Heart left ventricle (tissue), 16 donors: ENCODE measurements at regions of chr3 and their contacts with region 1.

Region 1: GRCh38 chr3:150238998-150239619 is 169.0 kb upstream of the TSC22D2 start:
- DNase-seq: no peak
- ATAC-seq: peak in 1 of 4 donors; percentile 23
- H3K4me3 ChIP-seq: no peak overlapping the region
- H3K27ac ChIP-seq: no peak overlapping the region
- H3K4me1 ChIP-seq: peaks cover 0 to 35% (median 8%) of the 10 kb centered on the region in 12 donors
- H3K27me3 ChIP-seq: no peaks in the 10 kb centered on the region
- CTCF ChIP-seq: peak in 8 of 12 donors; percentile 22 to 47 (median 35)
- POLR2A ChIP-seq: no peak

Region 2: GRCh38 chr3:150253622-150254021 is 14.5 kb after region 1 on chr3:
- intact Hi-C with region 1: loop called in 1 of 10 experiments (anchors 2 kb)
- DNase-seq: peak in 4 of 5 donors; percentile 19 to 27 (median 26)
- ATAC-seq: peak in 1 of 4 donors; percentile 22
- H3K4me3 ChIP-seq: no peak overlapping the region
- H3K27ac ChIP-seq: peak overlapping the region in 3 of 12 donors; percentile 17 to 88 (median 86)
- H3K4me1 ChIP-seq: peaks cover 0 to 53% (median 5%) of the 10 kb centered on the region in 12 donors
- H3K27me3 ChIP-seq: no peaks in the 10 kb centered on the region
- CTCF ChIP-seq: no peak
- POLR2A ChIP-seq: no peak

Region 3: GRCh38 chr3:150286390-150287147 is 47.5 kb after region 1 on chr3:
- intact Hi-C with region 1: loop called in 1 of 10 experiments (anchors 5 kb)
- DNase-seq: no peak
- ATAC-seq: peak; percentile 50 to 79 (median 71)
- H3K4me3 ChIP-seq: no peak overlapping the region
- H3K27ac ChIP-seq: no peak overlapping the region
- H3K4me1 ChIP-seq: no peaks in the 10 kb centered on the region
- H3K27me3 ChIP-seq: no peaks in the 10 kb centered on the region
- CTCF ChIP-seq: peak; percentile 39 to 70 (median 58)
- POLR2A ChIP-seq: no peak

Region 4: GRCh38 chr3:150449169-150449721 is 210.1 kb after region 1 on chr3:
- intact Hi-C with region 1: no loop called
- DNase-seq: no peak
- ATAC-seq: peak in 1 of 4 donors; percentile 45
- H3K4me3 ChIP-seq: no peak overlapping the region
- H3K27ac ChIP-seq: no peak overlapping the region
- H3K4me1 ChIP-seq: peaks cover 3 to 65% (median 36%) of the 10 kb centered on the region in 12 donors
- H3K27me3 ChIP-seq: no peaks in the 10 kb centered on the region
- CTCF ChIP-seq: no peak
- POLR2A ChIP-seq: no peak

Region 5: GRCh38 chr3:151816091-151816604 is 1577.0 kb after region 1 on chr3:
- intact Hi-C with region 1: no loop called
- DNase-seq: no peak
- ATAC-seq: peak in 3 of 4 donors; percentile 36 to 73 (median 49)
- H3K4me3 ChIP-seq: no peak overlapping the region
- H3K27ac ChIP-seq: no peak overlapping the region
- H3K4me1 ChIP-seq: no peaks in the 10 kb centered on the region
- H3K27me3 ChIP-seq: no peaks in the 10 kb centered on the region
- CTCF ChIP-seq: no peak
- POLR2A ChIP-seq: no peak